Activated CD4-positive, alpha-beta T cell treated with anti-CD3 and anti-CD28 coated beads for 36 hours (primary cell): ENCODE measurements at regions of chr21 and their contacts with region 1.

Region 1: DNA sequence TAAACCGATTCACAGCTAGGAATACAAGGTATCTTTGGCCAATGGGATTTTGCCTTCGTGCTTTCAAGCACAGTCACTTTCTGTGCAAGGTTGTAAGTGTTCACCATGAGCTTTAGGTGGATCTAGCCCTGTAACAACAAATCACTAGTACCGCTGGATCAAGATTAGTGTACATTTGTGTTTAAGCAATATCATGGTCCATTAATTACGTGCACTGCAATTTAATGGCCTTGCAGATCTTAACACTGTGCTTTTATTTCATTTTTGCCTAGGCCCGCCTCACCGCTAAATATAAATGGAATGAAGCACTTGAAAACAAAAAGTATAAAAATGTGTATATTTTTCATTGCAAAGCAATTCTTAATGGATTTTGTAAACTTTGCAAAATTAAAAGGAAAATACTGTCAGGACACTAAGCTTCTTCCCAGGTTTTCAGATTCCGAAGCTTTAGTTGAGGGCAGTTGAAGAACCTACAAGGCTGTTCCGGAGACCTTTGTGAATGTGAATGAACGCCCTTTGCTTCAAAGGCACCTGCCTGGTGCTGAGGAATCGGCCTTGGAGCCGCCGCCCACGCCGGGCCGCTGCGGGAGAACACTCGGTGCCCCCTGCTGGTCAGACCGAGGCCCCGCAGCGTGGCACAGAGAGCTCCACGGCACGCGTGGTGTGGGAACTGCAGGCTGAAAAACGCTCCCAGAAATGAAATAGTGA is 460.9 kb downstream of the DSCAM start:
- DNase-seq: peak; percentile 78
- ATAC-seq: no peak
- H3K4me3 Mint-ChIP-seq: no peak overlapping the region
- H3K27ac Mint-ChIP-seq: no peak overlapping the region
- H3K4me1 Mint-ChIP-seq: no peaks in the 10 kb centered on the region
- H3K27me3 Mint-ChIP-seq: peaks cover 14% of the 10 kb centered on the region

Region 2: GRCh38 chr21:39523399-39523798 is 862.6 kb before region 1 on chr21:
- CTCF ChIA-PET with region 1: no interaction called
- POLR2A ChIA-PET with region 1: no interaction called
- intact Hi-C with region 1: loop called in 1 of 2 experiments (anchors 5 kb)
- DNase-seq: no peak
- ATAC-seq: no peak
- H3K4me3 Mint-ChIP-seq: no peak overlapping the region
- H3K27ac Mint-ChIP-seq: no peak overlapping the region
- H3K4me1 Mint-ChIP-seq: no peaks in the 10 kb centered on the region
- H3K27me3 Mint-ChIP-seq: no peaks in the 10 kb centered on the region

Region 3: DNA sequence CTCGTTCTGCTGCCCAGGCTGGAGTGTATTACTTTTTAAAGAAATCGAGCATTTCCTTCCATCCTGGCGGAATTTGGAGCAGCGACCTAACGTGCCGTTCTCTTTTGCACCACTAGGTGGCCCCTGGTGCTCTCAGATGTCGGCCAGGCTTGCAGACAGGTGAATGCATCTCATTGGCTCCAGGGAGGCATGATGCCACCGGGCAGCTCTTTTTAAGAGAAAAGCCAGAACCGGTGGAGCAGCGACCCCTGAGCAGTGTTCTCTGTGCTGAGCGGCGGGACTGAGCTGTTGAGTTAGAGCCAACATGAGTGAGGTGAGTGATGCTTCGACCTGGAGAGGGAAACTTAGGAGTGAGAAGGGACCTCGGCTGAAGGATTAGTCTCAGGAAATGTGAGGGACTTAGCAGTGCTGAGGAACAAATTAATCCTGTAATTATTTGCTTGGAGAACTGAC is 518.8 kb before region 1 on chr21 and contains the start of gene PCP4:
- CTCF ChIA-PET with region 1: no interaction called
- POLR2A ChIA-PET with region 1: no interaction called
- intact Hi-C with region 1: loop called in 1 of 2 experiments (anchors 2 kb)
- DNase-seq: peak; percentile 68
- ATAC-seq: peak; percentile 23
- H3K4me3 Mint-ChIP-seq: no peak within 1 kb of the TSS
- H3K27ac Mint-ChIP-seq: no peak within 1 kb of the TSS
- H3K4me1 Mint-ChIP-seq: peaks cover 4% of the 10 kb centered on the region
- H3K27me3 Mint-ChIP-seq: peaks cover 9% of the 10 kb centered on the region
- total RNA-seq, gene PCP4: not detected

Region 4: GRCh38 chr21:40143822-40144525 is 242.1 kb before region 1 on chr21:
- CTCF ChIA-PET with region 1: interaction called, 9 read pairs
- POLR2A ChIA-PET with region 1: no interaction called
- intact Hi-C with region 1: loop called (anchors 1 to 5 kb)
- DNase-seq: peak; percentile 76
- ATAC-seq: no peak
- H3K4me3 Mint-ChIP-seq: no peak overlapping the region
- H3K27ac Mint-ChIP-seq: no peak overlapping the region
- H3K4me1 Mint-ChIP-seq: no peaks in the 10 kb centered on the region
- H3K27me3 Mint-ChIP-seq: no peaks in the 10 kb centered on the region